ENCODE measurements at regions of chr7 and their contacts with region 1.

Region 1: DNA sequence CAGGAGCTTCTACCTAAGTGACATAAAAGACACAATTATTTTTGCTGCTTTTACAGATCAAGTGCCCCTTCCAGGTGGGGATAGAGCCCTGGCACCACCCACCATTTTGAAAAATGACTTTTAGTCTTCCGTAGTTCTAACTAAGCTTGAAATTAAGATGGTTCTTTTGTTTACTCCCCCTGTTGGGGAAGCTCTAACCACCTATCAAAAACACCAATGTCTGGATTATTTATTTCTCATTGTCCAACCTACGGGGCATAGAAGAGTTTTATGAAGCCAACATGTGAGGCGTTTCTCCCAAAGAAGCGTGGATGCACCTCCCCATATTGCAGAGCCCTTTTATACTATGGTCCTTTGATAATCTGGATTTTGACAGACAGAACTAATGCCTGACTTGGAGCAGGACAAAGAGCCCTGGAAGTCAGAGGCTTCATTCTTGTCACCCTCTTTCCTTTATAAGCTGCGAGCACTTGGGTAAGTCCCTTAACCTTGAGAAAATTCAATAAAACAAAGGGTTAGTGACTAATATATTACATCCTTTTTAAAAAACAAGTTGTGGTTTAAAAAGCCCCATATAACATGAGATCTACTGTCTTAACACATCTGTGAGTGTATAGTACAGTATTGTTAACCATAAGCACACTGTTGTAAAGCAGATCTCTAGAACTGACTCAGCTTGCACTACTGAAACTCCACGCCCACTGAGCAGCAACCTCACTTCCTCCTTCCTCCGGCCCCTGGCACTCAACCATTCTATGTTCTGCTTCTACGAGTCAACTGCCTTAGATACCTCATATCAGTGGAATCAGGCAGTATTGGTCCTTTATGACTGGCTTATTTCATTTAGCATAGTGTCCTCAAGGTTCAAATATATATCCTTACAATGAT is 67.5 kb downstream of the ATXN7L1 start:
- DNase-seq: peak; percentile 97
- ATAC-seq: peak; percentile 86
- H3K4me3 Mint-ChIP-seq: no peak overlapping the region
- H3K27ac Mint-ChIP-seq: peak overlapping the region; percentile 84
- H3K4me1 Mint-ChIP-seq: peaks cover 60% of the 10 kb centered on the region
- H3K27me3 Mint-ChIP-seq: no peaks in the 10 kb centered on the region
- CTCF ChIP-seq: no peak

Region 2: GRCh38 chr7:105589356-105590077 is 219.4 kb before region 1 on chr7:
- CTCF ChIA-PET with region 1: no interaction called
- POLR2A ChIA-PET with region 1: no interaction called
- intact Hi-C with region 1: no loop called
- DNase-seq: peak; percentile 79
- ATAC-seq: peak; percentile 97
- H3K4me3 Mint-ChIP-seq: no peak overlapping the region
- H3K27ac Mint-ChIP-seq: no peak overlapping the region
- H3K4me1 Mint-ChIP-seq: peaks cover 9% of the 10 kb centered on the region
- H3K27me3 Mint-ChIP-seq: no peaks in the 10 kb centered on the region
- CTCF ChIP-seq: peak; percentile 74

Region 3: GRCh38 chr7:105678811-105679495 is 130.0 kb before region 1 on chr7:
- CTCF ChIA-PET with region 1: no interaction called
- POLR2A ChIA-PET with region 1: interaction called, 4 read pairs
- intact Hi-C with region 1: loop called (anchors 5 kb)
- DNase-seq: peak; percentile 18
- ATAC-seq: no peak
- H3K4me3 Mint-ChIP-seq: peak overlapping the region; percentile 71
- H3K27ac Mint-ChIP-seq: peak overlapping the region; percentile 89
- H3K4me1 Mint-ChIP-seq: peaks cover 57% of the 10 kb centered on the region
- H3K27me3 Mint-ChIP-seq: no peaks in the 10 kb centered on the region
- CTCF ChIP-seq: no peak

Region 4: DNA sequence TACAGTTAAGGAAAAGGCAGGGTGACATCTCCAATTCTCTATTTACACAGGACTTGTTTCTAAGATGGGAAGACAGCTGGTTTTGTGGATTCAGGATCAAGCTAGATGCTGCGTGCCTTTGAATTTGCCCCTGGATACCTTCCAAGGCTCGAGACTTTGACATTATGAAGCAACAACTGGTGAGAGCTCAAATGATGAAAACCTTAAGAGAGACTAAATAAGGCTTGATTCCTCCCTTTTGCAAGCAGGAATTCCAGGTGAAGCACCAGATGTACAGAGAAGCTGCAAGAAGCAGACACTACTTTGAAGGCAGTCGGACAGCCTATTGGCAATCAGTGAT is 13.6 kb before region 1 on chr7:
- CTCF ChIA-PET with region 1: interaction called, 13 read pairs
- POLR2A ChIA-PET with region 1: interaction called, 3 read pairs
- intact Hi-C with region 1: no loop called
- DNase-seq: no peak
- ATAC-seq: no peak
- H3K4me3 Mint-ChIP-seq: no peak overlapping the region
- H3K27ac Mint-ChIP-seq: no peak overlapping the region
- H3K4me1 Mint-ChIP-seq: peaks cover 24% of the 10 kb centered on the region
- H3K27me3 Mint-ChIP-seq: no peaks in the 10 kb centered on the region
- CTCF ChIP-seq: no peak

Region 5: DNA sequence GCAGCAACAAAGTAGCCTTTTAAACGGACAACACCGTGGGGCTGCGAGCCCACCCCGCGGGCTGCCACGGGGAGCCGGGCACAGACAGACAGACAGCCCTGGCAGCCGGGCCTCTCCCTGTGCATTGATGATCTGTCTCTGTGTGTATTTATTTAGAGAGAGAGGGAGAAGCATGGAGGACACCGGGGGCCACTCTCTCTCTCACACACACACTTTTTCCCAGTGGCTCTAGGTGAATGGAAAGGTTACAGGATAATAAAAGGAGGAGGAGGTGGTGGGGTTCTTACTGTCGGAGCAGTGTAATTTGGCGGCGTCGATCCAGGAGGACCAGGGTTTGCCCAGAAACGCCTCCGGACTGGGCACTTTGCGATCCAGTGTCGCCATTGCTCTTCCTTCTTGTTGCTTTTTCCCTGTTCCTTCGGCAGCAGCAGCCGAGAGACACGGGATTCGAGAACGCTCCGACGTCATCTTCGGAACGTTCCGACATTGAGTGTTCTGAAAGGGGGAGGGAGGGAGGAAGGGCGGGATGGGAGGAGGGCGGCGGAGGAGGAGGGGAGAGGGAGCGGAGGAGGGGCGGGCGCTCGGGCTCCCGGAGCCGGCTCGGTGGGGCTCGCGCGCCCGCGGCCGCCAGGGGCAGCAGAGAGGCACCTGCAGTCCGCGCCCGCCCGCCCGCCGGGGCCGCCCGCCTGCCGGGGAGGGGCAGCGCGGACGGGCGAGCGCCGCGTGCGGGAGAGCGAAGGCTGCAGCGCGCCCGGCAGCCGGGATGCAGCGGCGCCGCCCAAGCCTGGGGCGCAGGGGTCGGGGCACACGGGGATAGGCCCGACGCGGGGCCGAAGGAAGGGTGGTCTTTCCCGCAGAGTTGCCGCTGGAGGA is 67.4 kb after region 1 on chr7 and contains the start of gene ATXN7L1:
- CTCF ChIA-PET with region 1: interaction called, 24 read pairs
- POLR2A ChIA-PET with region 1: interaction called, 7 read pairs
- intact Hi-C with region 1: loop called (anchors 2 kb)
- DNase-seq: peak; percentile 91
- ATAC-seq: peak; percentile 91
- H3K4me3 Mint-ChIP-seq: peak within 1 kb of the TSS; percentile 87
- H3K27ac Mint-ChIP-seq: peak within 1 kb of the TSS; percentile 85
- H3K4me1 Mint-ChIP-seq: peaks cover 56% of the 10 kb centered on the region
- H3K27me3 Mint-ChIP-seq: peaks cover 1% of the 10 kb centered on the region
- CTCF ChIP-seq: peak; percentile 58
- total RNA-seq, gene ATXN7L1: 4.8 to 5.3 TPM

Region 6: GRCh38 chr7:105896407-105896911 is 87.5 kb after region 1 on chr7:
- CTCF ChIA-PET with region 1: no interaction called
- POLR2A ChIA-PET with region 1: no interaction called
- intact Hi-C with region 1: no loop called
- DNase-seq: no peak
- ATAC-seq: no peak
- H3K4me3 Mint-ChIP-seq: no peak overlapping the region
- H3K27ac Mint-ChIP-seq: no peak overlapping the region
- H3K4me1 Mint-ChIP-seq: peaks cover 8% of the 10 kb centered on the region
- H3K27me3 Mint-ChIP-seq: no peaks in the 10 kb centered on the region
- CTCF ChIP-seq: no peak

Region 7: DNA sequence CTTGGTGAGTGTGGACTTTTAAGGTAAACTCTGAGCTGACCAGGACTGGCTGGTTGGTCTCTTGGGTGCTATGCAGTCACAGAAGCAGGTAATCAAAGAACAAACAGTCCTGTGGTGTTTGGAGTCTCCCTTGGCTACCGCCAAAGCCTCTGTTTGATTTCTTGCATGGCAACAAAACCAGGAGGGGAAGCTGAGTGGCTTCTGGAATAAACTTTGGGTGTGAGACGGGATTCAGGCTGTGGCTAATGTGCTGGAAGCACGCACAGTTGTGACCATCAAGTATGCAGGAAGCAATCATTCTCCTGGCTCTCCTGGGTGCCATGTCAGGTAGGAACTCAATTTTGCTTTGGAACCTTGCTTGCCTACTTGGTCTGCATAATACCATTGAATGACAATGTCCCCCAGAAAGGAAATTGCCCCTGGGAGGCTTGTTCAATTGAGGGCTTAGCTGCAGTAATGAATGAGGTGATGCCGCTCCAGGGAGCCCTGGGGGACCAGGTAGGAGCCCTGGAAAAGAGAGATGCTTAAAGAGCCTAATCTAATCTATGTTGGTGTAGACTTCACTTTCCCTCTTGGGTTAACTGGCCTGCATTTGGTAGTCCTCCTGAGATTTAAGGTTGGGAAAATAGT is 154.2 kb after region 1 on chr7 and contains the start of gene CDHR3:
- CTCF ChIA-PET with region 1: no interaction called
- POLR2A ChIA-PET with region 1: no interaction called
- intact Hi-C with region 1: no loop called
- DNase-seq: no peak
- ATAC-seq: no peak
- H3K4me3 Mint-ChIP-seq: no peak within 1 kb of the TSS
- H3K27ac Mint-ChIP-seq: no peak within 1 kb of the TSS
- H3K4me1 Mint-ChIP-seq: no peaks in the 10 kb centered on the region
- H3K27me3 Mint-ChIP-seq: no peaks in the 10 kb centered on the region
- CTCF ChIP-seq: no peak
- total RNA-seq, gene CDHR3: 0.58 to 0.74 TPM

Region 8: DNA sequence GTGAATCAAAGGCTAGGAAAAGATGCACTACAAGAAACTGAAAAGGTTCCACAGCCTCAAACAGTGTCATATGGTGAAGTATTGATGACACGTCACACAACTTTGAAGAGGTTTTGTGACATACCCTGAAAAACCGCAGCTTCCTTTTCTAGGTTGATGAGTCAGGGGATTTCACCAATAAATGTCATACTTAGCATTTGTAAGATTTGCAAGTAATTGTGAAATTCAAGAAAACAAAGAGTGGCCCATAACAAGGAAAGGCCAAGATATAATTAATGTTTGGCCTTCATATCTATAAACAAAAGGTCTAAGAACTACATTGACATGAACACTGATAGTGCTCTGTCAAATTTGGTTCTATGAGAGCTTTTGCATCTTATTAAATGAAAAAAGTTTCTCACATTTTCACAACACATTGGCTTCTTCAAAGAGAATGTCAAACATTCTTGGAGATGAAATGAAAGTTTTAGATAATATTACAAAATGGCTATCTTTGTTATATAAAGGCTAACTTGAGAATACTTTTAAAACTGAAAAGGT is 537.8 kb after region 1 on chr7:
- CTCF ChIA-PET with region 1: no interaction called
- POLR2A ChIA-PET with region 1: no interaction called
- intact Hi-C with region 1: loop called (anchors 5 kb)
- DNase-seq: peak; percentile 75
- ATAC-seq: peak; percentile 67
- H3K4me3 Mint-ChIP-seq: peak overlapping the region; percentile 67
- H3K27ac Mint-ChIP-seq: peak overlapping the region; percentile 100
- H3K4me1 Mint-ChIP-seq: peaks cover 52% of the 10 kb centered on the region
- H3K27me3 Mint-ChIP-seq: peaks cover 6% of the 10 kb centered on the region
- CTCF ChIP-seq: no peak